Posterior cingulate gyrus (tissue), 11 donors: ENCODE measurements at regions of chrX and their contacts with region 1.

Region 1: DNA sequence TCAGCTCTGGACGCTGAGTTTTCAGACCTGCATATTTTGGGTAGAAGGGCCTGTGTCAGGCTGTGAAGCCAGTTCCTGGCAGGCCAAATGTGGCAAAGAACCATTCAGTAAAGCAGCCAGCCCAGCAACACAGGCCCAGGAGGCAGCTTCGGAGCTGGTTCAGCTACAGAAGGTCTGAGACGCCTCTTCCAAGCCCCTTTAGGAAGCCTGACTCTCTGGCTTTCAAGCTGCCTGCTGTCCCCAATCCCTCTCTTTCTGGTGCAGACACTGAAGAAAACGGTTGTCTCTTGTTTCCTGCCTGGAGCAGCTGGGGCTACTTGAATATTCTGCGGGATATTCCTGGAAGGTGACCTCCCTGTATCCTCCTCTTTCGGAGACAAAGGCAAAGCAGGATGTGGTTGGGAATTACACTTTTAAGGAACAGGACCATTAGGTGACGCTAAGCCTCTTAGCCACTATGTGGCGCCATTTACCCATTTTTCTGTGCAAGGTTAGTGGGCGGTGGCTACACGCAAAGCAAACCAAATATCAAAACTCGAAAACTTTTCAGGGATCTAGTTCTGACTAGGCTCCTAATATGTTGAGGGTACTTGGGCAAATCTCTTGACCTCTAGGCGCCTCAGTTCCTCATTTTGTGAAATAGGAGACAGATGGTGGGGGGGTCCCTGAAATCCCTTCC is 47.2 kb upstream of the LAS1L start:
- DNase-seq: peak in 7 of 10 donors; percentile 13 to 90 (median 59)

Region 2: GRCh38 chrX:65985922-65986588 is 404.3 kb after region 1 on chrX:
- intact Hi-C with region 1: loop called (anchors 2 kb)
- DNase-seq: no peak

Region 3: GRCh38 chrX:66731398-66731797 is 1149.6 kb after region 1 on chrX:
- intact Hi-C with region 1: loop called (anchors 5 kb)
- DNase-seq: no peak